Esophagus squamous epithelium (tissue), 5 donors: ENCODE measurements at regions of chr11 and their contacts with region 1.

Region 1: GRCh38 chr11:7657306-7658025 is 15.8 kb downstream of the CYB5R2 start:
- DNase-seq: no peak
- H3K4me3 ChIP-seq: no peak overlapping the region
- H3K27ac ChIP-seq: peak overlapping the region in 1 of 4 donors; percentile 33
- H3K4me1 ChIP-seq: no peaks in the 10 kb centered on the region
- H3K27me3 ChIP-seq: no peaks in the 10 kb centered on the region
- CTCF ChIP-seq: peak in 5 of 6 experiments; percentile 37 to 76 (median 54)
- POLR2A ChIP-seq: no peak

Region 2: GRCh38 chr11:7571640-7572000 is 85.8 kb before region 1 on chr11:
- intact Hi-C with region 1: loop called (anchors 5 kb)
- DNase-seq: no peak
- H3K4me3 ChIP-seq: no peak overlapping the region
- H3K27ac ChIP-seq: peak overlapping the region; percentile 38 to 71 (median 62)
- H3K4me1 ChIP-seq: peaks cover 24 to 74% (median 25%) of the 10 kb centered on the region in 3 donors
- H3K27me3 ChIP-seq: peaks cover 0 to 6% (median 0%) of the 10 kb centered on the region in 4 donors
- CTCF ChIP-seq: peak; percentile 62 to 96 (median 92)
- POLR2A ChIP-seq: no peak